WTC11 (cell line): ENCODE measurements at regions of chr1 and their contacts with region 1.

Region 1: GRCh38 chr1:158496374-158496773 is 24.4 kb downstream of the OR10R2 start:
- DNase-seq: no peak
- ATAC-seq: peak; percentile 85
- H3K4me3 Mint-ChIP-seq: no peak overlapping the region
- H3K27ac Mint-ChIP-seq: no peak overlapping the region
- H3K4me1 Mint-ChIP-seq: 0 out of 2 replicates have a peak, but pooled peaks cover 5% of the 10 kb centered on the region
- H3K27me3 Mint-ChIP-seq: no peaks in the 10 kb centered on the region
- CTCF ChIP-seq: 0 out of 2 replicates have a peak, but pooled peaks have one; percentile 17

Region 2: GRCh38 chr1:158180741-158181576 is 315.4 kb before region 1 on chr1 and contains the start of gene CD1D:
- CTCF ChIA-PET with region 1: interaction called, 14 read pairs
- POLR2A ChIA-PET with region 1: no interaction called
- DNase-seq: peak; percentile 64
- ATAC-seq: peak; percentile 55
- H3K4me3 Mint-ChIP-seq: peak within 1 kb of the TSS; percentile 92
- H3K27ac Mint-ChIP-seq: no peak within 1 kb of the TSS
- H3K4me1 Mint-ChIP-seq: peaks cover 45% of the 10 kb centered on the region
- H3K27me3 Mint-ChIP-seq: peaks cover 90% of the 10 kb centered on the region
- CTCF ChIP-seq: no peak
- total RNA-seq, gene CD1D: 3.8 to 4.7 TPM (median 3.9 TPM) in 3 replicates

Region 3: GRCh38 chr1:158203693-158204457 is 292.5 kb before region 1 on chr1:
- CTCF ChIA-PET with region 1: interaction called, 89 read pairs
- POLR2A ChIA-PET with region 1: interaction called, 3 read pairs
- DNase-seq: no peak
- ATAC-seq: peak; percentile 82
- H3K4me3 Mint-ChIP-seq: peak overlapping the region; percentile 51
- H3K27ac Mint-ChIP-seq: no peak overlapping the region
- H3K4me1 Mint-ChIP-seq: peaks cover 18% of the 10 kb centered on the region
- H3K27me3 Mint-ChIP-seq: no peaks in the 10 kb centered on the region
- CTCF ChIP-seq: peak; percentile 65

Region 4: DNA sequence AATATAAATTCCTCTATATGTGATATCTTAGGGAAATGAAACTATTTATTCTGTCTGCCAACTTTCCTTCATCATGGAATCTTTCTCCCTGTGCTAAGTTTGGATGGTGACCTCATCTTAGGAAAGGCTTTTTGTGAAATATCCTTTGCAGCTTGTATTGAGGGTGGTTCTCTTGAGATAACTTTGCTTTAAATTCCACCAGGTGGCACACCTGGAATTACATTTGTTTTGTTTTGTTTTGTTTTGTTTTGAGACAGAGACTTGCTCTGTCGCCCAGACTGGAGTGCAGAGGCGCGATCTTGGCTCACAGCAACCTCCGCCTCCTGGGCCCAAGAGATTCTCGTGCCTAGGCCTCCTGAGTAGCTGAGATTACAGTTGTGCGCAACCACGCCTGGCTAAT is 249.7 kb before region 1 on chr1:
- CTCF ChIA-PET with region 1: interaction called, 10 read pairs
- POLR2A ChIA-PET with region 1: no interaction called
- DNase-seq: no peak
- ATAC-seq: no peak
- H3K4me3 Mint-ChIP-seq: no peak overlapping the region
- H3K27ac Mint-ChIP-seq: no peak overlapping the region
- H3K4me1 Mint-ChIP-seq: no peaks in the 10 kb centered on the region
- H3K27me3 Mint-ChIP-seq: no peaks in the 10 kb centered on the region; the same call in 1 of the 2 replicates
- CTCF ChIP-seq: no peak

Region 5: DNA sequence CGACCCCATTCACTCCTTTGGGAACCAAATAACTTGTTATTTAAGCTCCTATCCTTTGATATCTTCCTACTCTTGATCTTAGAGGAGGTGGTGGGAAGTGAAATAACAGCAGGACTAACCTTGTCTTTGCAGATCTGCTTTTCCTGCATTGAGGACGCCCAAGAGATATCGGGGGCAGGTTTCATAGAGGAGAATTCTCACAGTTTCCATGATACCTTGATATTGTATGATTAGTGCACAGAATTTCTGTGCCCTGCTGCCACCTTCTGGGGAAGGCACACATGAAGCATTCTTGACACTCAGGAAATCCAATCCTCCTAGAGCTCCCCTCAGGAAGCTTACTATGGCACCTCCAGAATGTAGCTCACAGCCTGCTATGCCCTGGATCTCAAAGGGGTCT is 166.6 kb before region 1 on chr1:
- CTCF ChIA-PET with region 1: interaction called, 12 read pairs
- POLR2A ChIA-PET with region 1: no interaction called
- DNase-seq: peak; percentile 19
- ATAC-seq: peak; percentile 76
- H3K4me3 Mint-ChIP-seq: no peak overlapping the region
- H3K27ac Mint-ChIP-seq: no peak overlapping the region
- H3K4me1 Mint-ChIP-seq: no peaks in the 10 kb centered on the region
- H3K27me3 Mint-ChIP-seq: no peaks in the 10 kb centered on the region
- CTCF ChIP-seq: no peak

Region 6: DNA sequence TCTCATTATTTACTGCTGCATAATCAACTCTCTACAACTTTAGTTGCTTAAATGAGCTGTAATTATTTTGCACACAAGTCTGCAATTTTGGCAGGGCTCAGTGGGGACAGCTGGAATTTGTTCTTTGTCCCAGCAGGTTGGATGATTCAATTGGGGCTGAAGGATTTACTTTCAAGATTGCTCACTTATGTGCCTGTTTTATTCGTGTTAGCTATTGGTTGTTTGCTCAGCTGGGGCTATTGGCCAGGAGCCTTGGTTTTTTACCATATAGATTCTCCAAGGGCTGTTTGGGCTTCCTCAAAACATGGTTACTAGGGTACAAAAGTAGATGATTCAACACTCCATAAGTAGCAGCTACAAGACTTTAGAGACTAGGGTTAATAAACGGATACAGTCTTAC is 10.9 kb before region 1 on chr1:
- CTCF ChIA-PET with region 1: interaction called, 12 read pairs
- POLR2A ChIA-PET with region 1: no interaction called
- DNase-seq: no peak
- ATAC-seq: no peak
- H3K4me3 Mint-ChIP-seq: no peak overlapping the region
- H3K27ac Mint-ChIP-seq: no peak overlapping the region
- H3K4me1 Mint-ChIP-seq: peaks cover 23% of the 10 kb centered on the region
- H3K27me3 Mint-ChIP-seq: no peaks in the 10 kb centered on the region
- CTCF ChIP-seq: no peak

Region 7: GRCh38 chr1:158516966-158517365 is 20.6 kb after region 1 on chr1:
- CTCF ChIA-PET with region 1: no interaction called
- POLR2A ChIA-PET with region 1: no interaction called
- DNase-seq: no peak
- ATAC-seq: no peak
- H3K4me3 Mint-ChIP-seq: no peak overlapping the region
- H3K27ac Mint-ChIP-seq: no peak overlapping the region
- H3K4me1 Mint-ChIP-seq: peaks cover 16% of the 10 kb centered on the region
- H3K27me3 Mint-ChIP-seq: no peaks in the 10 kb centered on the region
- CTCF ChIP-seq: no peak

Region 8: DNA sequence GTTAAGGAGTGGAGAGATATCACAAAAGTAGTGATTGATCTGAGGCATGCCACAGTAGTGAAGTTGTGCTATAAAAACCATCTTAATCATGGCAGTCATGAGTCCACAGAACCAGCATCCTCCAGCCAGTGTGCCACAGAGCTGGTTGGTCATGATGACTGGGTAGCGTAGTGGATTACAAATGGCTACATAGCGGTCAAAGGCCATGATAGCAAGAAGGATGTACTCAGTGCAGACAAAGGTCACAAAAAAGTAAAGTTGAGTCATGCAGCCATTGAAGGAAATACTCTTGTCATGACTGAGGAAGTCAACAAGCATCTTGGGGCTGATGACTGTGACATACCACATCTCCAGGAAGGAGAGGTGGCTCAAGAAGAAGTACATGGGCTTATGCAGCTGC is 51.2 kb after region 1 on chr1:
- CTCF ChIA-PET with region 1: no interaction called
- POLR2A ChIA-PET with region 1: no interaction called
- DNase-seq: no peak
- ATAC-seq: no peak
- H3K4me3 Mint-ChIP-seq: no peak overlapping the region
- H3K27ac Mint-ChIP-seq: no peak overlapping the region
- H3K4me1 Mint-ChIP-seq: no peaks in the 10 kb centered on the region
- H3K27me3 Mint-ChIP-seq: no peaks in the 10 kb centered on the region
- CTCF ChIP-seq: no peak